CD4-positive, alpha-beta T cell (primary cell): ENCODE measurements at regions of chr7 and their contacts with region 1.

Region 1: GRCh38 chr7:151519765-151520418 is at the start of gene RHEB:
- DNase-seq: peak; percentile 97 to 99 (median 98)
- ATAC-seq: peak; percentile 85
- H3K4me3 ChIP-seq: peak within 1 kb of the TSS; percentile 62
- H3K4me3 Mint-ChIP-seq: peak within 1 kb of the TSS; percentile 99
- H3K27ac ChIP-seq: peak within 1 kb of the TSS; percentile 79
- H3K27ac Mint-ChIP-seq: peak within 1 kb of the TSS; percentile 98
- H3K4me1 ChIP-seq: peaks cover 37% of the 10 kb centered on the region
- H3K4me1 Mint-ChIP-seq: peaks cover 44% of the 10 kb centered on the region
- H3K27me3 ChIP-seq: no peaks in the 10 kb centered on the region
- H3K27me3 Mint-ChIP-seq: no peaks in the 10 kb centered on the region
- CTCF ChIP-seq: no peak
- total RNA-seq, gene RHEB: 40.3 to 42.6 TPM

Region 2: GRCh38 chr7:151341357-151342101 is 178.4 kb before region 1 on chr7 and contains the start of gene NUB1:
- CTCF ChIA-PET with region 1: no interaction called
- POLR2A ChIA-PET with region 1: interaction called, 3 read pairs
- intact Hi-C with region 1: loop called in 1 of 2 experiments (anchors 10 kb)
- DNase-seq: peak; percentile 81 to 98 (median 90)
- ATAC-seq: peak; percentile 90
- H3K4me3 ChIP-seq: peak within 1 kb of the TSS; percentile 88
- H3K4me3 Mint-ChIP-seq: peak within 1 kb of the TSS; percentile 93
- H3K27ac ChIP-seq: peak within 1 kb of the TSS; percentile 55 to 88
- H3K27ac Mint-ChIP-seq: peak within 1 kb of the TSS; percentile 92
- H3K4me1 ChIP-seq: peaks cover 34% of the 10 kb centered on the region
- H3K4me1 Mint-ChIP-seq: peaks cover 49% of the 10 kb centered on the region
- H3K27me3 ChIP-seq: no peaks in the 10 kb centered on the region
- H3K27me3 Mint-ChIP-seq: no peaks in the 10 kb centered on the region
- CTCF ChIP-seq: no peak
- total RNA-seq, gene NUB1: 86.0 to 90.4 TPM

Region 3: GRCh38 chr7:151631968-151632749 is 112.3 kb after region 1 on chr7:
- CTCF ChIA-PET with region 1: interaction called, 11 read pairs
- POLR2A ChIA-PET with region 1: interaction called, 42 read pairs
- intact Hi-C with region 1: loop called (anchors 2 to 10 kb)
- DNase-seq: peak; percentile 76 to 96 (median 89)
- ATAC-seq: peak; percentile 83
- H3K4me3 ChIP-seq: peak overlapping the region; percentile 68
- H3K4me3 Mint-ChIP-seq: peak overlapping the region; percentile 95
- H3K27ac ChIP-seq: peak overlapping the region; percentile 75 to 82
- H3K27ac Mint-ChIP-seq: peak overlapping the region; percentile 99
- H3K4me1 ChIP-seq: peaks cover 15% of the 10 kb centered on the region
- H3K4me1 Mint-ChIP-seq: peaks cover 45% of the 10 kb centered on the region
- H3K27me3 ChIP-seq: no peaks in the 10 kb centered on the region
- H3K27me3 Mint-ChIP-seq: no peaks in the 10 kb centered on the region
- CTCF ChIP-seq: no peak

Region 4: GRCh38 chr7:151936207-151936606 is 416.3 kb after region 1 on chr7:
- CTCF ChIA-PET with region 1: no interaction called
- POLR2A ChIA-PET with region 1: interaction called, 3 read pairs
- intact Hi-C with region 1: loop called in 1 of 2 experiments (anchors 10 kb)
- DNase-seq: peak in 3 of 14 experiments; percentile 76 to 84 (median 77)
- ATAC-seq: peak; percentile 88
- H3K4me3 ChIP-seq: peak overlapping the region; percentile 38
- H3K4me3 Mint-ChIP-seq: peak overlapping the region; percentile 87
- H3K27ac ChIP-seq: peak overlapping the region; percentile 49 to 80
- H3K27ac Mint-ChIP-seq: peak overlapping the region; percentile 89
- H3K4me1 ChIP-seq: peaks cover 18% of the 10 kb centered on the region
- H3K4me1 Mint-ChIP-seq: peaks cover 25% of the 10 kb centered on the region
- H3K27me3 ChIP-seq: no peaks in the 10 kb centered on the region
- H3K27me3 Mint-ChIP-seq: no peaks in the 10 kb centered on the region
- CTCF ChIP-seq: no peak

Region 5: GRCh38 chr7:152759949-152760853 is 1240.3 kb after region 1 on chr7:
- CTCF ChIA-PET with region 1: no interaction called
- POLR2A ChIA-PET with region 1: no interaction called
- intact Hi-C with region 1: loop called in 1 of 2 experiments (anchors 10 kb)
- DNase-seq: peak in 10 of 14 experiments; percentile 1 to 50 (median 7)
- ATAC-seq: peak; percentile 23
- H3K4me3 ChIP-seq: peak overlapping the region; percentile 74
- H3K4me3 Mint-ChIP-seq: peak overlapping the region; percentile 92
- H3K27ac ChIP-seq: peak overlapping the region in 1 of 2 donors; percentile 70
- H3K27ac Mint-ChIP-seq: peak overlapping the region; percentile 78
- H3K4me1 ChIP-seq: peaks cover 16% of the 10 kb centered on the region
- H3K4me1 Mint-ChIP-seq: peaks cover 21% of the 10 kb centered on the region
- H3K27me3 ChIP-seq: no peaks in the 10 kb centered on the region
- H3K27me3 Mint-ChIP-seq: no peaks in the 10 kb centered on the region
- CTCF ChIP-seq: no peak